Caco-2 (cell line): ENCODE measurements at regions of chr9 and their contacts with region 1.

Region 1: GRCh38 chr9:72856972-72857623 is 95.8 kb downstream of the ALDH1A1 start:
- DNase-seq: peak in 1 of 2 experiments; percentile 17
- H3K4me3 ChIP-seq: no peak overlapping the region
- H3K4me3 Mint-ChIP-seq: no peak overlapping the region
- H3K27ac Mint-ChIP-seq: no peak overlapping the region
- H3K4me1 ChIP-seq: no peaks in the 10 kb centered on the region
- H3K4me1 Mint-ChIP-seq: no peaks in the 10 kb centered on the region
- H3K27me3 ChIP-seq: no peaks in the 10 kb centered on the region
- H3K27me3 Mint-ChIP-seq: no peaks in the 10 kb centered on the region
- CTCF ChIP-seq: peak in 1 of 2 experiments; percentile 24

Region 2: DNA sequence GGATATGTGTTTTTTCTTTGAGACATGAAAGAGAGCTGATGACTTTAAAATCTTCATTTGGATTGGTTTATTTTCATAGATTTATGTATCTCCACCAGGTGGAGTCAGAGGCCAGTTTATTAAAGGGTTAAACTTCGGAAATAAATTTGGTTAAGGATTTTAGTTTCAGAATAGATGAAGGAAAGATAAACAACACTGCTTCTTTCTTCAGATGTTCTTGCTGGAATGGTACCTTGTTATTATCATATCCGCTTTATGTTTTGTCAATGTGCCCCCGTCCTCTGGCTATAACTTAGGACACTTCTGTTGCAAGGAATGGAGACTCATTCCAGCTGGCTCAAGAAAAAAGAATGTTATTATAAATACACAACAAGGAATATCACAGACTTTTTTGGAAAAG is 14.6 kb after region 1 on chr9:
- CTCF ChIA-PET with region 1: no interaction called
- POLR2A ChIA-PET with region 1: no interaction called
- intact Hi-C with region 1: no loop called
- DNase-seq: no peak
- H3K4me3 ChIP-seq: no peak overlapping the region
- H3K4me3 Mint-ChIP-seq: no peak overlapping the region
- H3K27ac Mint-ChIP-seq: no peak overlapping the region
- H3K4me1 ChIP-seq: no peaks in the 10 kb centered on the region
- H3K4me1 Mint-ChIP-seq: no peaks in the 10 kb centered on the region
- H3K27me3 ChIP-seq: no peaks in the 10 kb centered on the region
- H3K27me3 Mint-ChIP-seq: no peaks in the 10 kb centered on the region
- CTCF ChIP-seq: no peak

Region 3: GRCh38 chr9:72960446-72960845 is 103.3 kb after region 1 on chr9:
- CTCF ChIA-PET with region 1: no interaction called
- POLR2A ChIA-PET with region 1: no interaction called
- intact Hi-C with region 1: loop called (anchors 5 kb)
- DNase-seq: no peak
- H3K4me3 ChIP-seq: no peak overlapping the region
- H3K4me3 Mint-ChIP-seq: no peak overlapping the region
- H3K27ac Mint-ChIP-seq: no peak overlapping the region
- H3K4me1 ChIP-seq: no peaks in the 10 kb centered on the region
- H3K4me1 Mint-ChIP-seq: no peaks in the 10 kb centered on the region
- H3K27me3 ChIP-seq: no peaks in the 10 kb centered on the region
- H3K27me3 Mint-ChIP-seq: no peaks in the 10 kb centered on the region
- CTCF ChIP-seq: no peak

Region 4: GRCh38 chr9:73023025-73023541 is 166.0 kb after region 1 on chr9:
- CTCF ChIA-PET with region 1: no interaction called
- POLR2A ChIA-PET with region 1: no interaction called
- intact Hi-C with region 1: loop called (anchors 1 kb)
- DNase-seq: peak; percentile 22 to 29
- H3K4me3 ChIP-seq: no peak overlapping the region
- H3K4me3 Mint-ChIP-seq: no peak overlapping the region
- H3K27ac Mint-ChIP-seq: no peak overlapping the region
- H3K4me1 ChIP-seq: no peaks in the 10 kb centered on the region
- H3K4me1 Mint-ChIP-seq: no peaks in the 10 kb centered on the region
- H3K27me3 ChIP-seq: no peaks in the 10 kb centered on the region
- H3K27me3 Mint-ChIP-seq: no peaks in the 10 kb centered on the region
- CTCF ChIP-seq: peak; percentile 39 to 53

Region 5: GRCh38 chr9:73081979-73082657 is 225.0 kb after region 1 on chr9:
- CTCF ChIA-PET with region 1: interaction called, 7 read pairs
- POLR2A ChIA-PET with region 1: no interaction called
- intact Hi-C with region 1: loop called (anchors 1 kb)
- DNase-seq: peak in 1 of 2 experiments; percentile 0
- H3K4me3 ChIP-seq: no peak overlapping the region
- H3K4me3 Mint-ChIP-seq: no peak overlapping the region
- H3K27ac Mint-ChIP-seq: no peak overlapping the region
- H3K4me1 ChIP-seq: no peaks in the 10 kb centered on the region
- H3K4me1 Mint-ChIP-seq: no peaks in the 10 kb centered on the region
- H3K27me3 ChIP-seq: no peaks in the 10 kb centered on the region
- H3K27me3 Mint-ChIP-seq: no peaks in the 10 kb centered on the region
- CTCF ChIP-seq: peak; percentile 29 to 35

Region 6: GRCh38 chr9:73183917-73184861 is 327.1 kb after region 1 on chr9:
- CTCF ChIA-PET with region 1: no interaction called
- POLR2A ChIA-PET with region 1: no interaction called
- intact Hi-C with region 1: loop called (anchors 5 kb)
- DNase-seq: no peak
- H3K4me3 ChIP-seq: no peak overlapping the region
- H3K4me3 Mint-ChIP-seq: no peak overlapping the region
- H3K27ac Mint-ChIP-seq: no peak overlapping the region
- H3K4me1 ChIP-seq: no peaks in the 10 kb centered on the region
- H3K4me1 Mint-ChIP-seq: no peaks in the 10 kb centered on the region
- H3K27me3 ChIP-seq: no peaks in the 10 kb centered on the region
- H3K27me3 Mint-ChIP-seq: no peaks in the 10 kb centered on the region
- CTCF ChIP-seq: no peak